ENCODE measurements at regions of chr15 and their contacts with region 1.

Region 1: DNA sequence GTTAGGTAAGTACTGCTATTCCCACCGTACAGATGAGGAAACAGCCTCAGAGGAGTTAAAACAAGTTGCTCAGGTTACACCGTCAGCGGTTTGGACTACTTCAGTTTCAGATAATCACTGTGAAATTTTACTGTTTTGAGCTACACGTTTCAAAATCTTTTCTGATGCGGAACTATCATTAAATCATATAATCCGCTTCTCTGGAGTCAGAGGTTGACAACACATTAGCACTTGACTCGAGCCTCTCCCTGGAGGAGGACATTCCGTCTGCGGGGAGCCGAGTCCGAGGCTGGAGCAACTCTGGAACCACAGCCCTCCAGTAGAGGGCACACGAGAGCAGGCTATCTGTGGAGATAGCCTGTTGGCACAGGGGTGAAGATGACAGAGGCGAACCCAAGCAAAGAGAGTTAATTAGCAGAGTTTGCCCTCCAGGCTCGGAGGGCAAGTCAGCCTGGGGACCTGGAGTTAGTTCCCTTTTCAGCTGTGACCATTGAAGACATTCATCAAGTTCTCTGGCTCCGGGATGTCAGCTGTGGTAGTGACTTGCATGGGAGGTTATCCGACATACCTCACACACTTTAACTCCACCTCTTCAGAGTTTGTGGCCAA is 131.2 kb downstream of the IGF1R start:
- DNase-seq: peak; percentile 64
- ATAC-seq: peak; percentile 83
- H3K4me3 ChIP-seq: no peak overlapping the region
- H3K27ac ChIP-seq: no peak overlapping the region
- H3K4me1 ChIP-seq: peaks cover 66% of the 10 kb centered on the region
- H3K27me3 ChIP-seq: no peaks in the 10 kb centered on the region
- CTCF ChIP-seq: peak; percentile 95
- EP300 ChIP-seq: no peak
- POLR2A ChIP-seq: no peak
- RAD21 ChIP-seq: peak; percentile 82

Region 2: DNA sequence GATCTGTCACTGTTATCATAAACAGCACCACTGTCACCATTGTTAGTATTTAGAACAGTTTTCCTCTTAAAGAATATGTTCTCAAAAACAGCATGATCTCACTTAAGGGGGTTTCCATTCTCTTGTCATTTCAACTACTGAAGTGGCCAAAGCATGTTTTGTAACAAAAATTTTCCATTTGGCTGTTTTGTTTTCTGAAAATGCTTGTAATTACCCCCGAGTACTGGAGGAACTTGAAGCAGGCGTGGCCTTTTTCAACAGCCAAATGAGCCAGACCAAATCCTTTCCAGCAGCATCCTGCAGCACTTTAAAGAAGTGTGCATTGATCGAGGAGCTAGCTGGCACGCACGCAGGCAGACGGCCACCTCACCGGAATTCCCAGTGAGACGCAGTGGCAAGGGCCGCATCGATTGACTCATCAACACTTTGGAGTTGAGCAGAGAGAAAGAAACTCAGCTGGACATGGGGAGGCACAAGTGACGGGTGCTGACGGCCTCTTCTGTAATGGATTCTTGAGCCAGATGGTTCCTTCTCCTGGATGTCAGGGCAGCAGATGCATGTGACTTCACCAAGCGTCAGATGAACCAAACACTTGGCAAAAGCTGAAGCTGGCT is 365.5 kb before region 1 on chr15:
- CTCF ChIA-PET with region 1: no interaction called
- POLR2A ChIA-PET with region 1: no interaction called
- in situ Hi-C with region 1: no loop called
- intact Hi-C with region 1: no loop called
- DNase-seq: no peak
- ATAC-seq: no peak
- H3K4me3 ChIP-seq: no peak overlapping the region
- H3K27ac ChIP-seq: no peak overlapping the region
- H3K4me1 ChIP-seq: no peaks in the 10 kb centered on the region
- H3K27me3 ChIP-seq: no peaks in the 10 kb centered on the region; a peak in 1 of 5 replicates
- CTCF ChIP-seq: no peak
- EP300 ChIP-seq: no peak
- POLR2A ChIP-seq: no peak
- RAD21 ChIP-seq: no peak

Region 3: GRCh38 chr15:98442379-98442833 is 337.2 kb before region 1 on chr15:
- CTCF ChIA-PET with region 1: no interaction called
- POLR2A ChIA-PET with region 1: no interaction called
- in situ Hi-C with region 1: no loop called
- intact Hi-C with region 1: loop called (anchors 5 kb)
- DNase-seq: peak; percentile 51
- ATAC-seq: peak; percentile 75
- H3K4me3 ChIP-seq: no peak overlapping the region
- H3K27ac ChIP-seq: no peak overlapping the region
- H3K4me1 ChIP-seq: no peaks in the 10 kb centered on the region
- H3K27me3 ChIP-seq: peaks cover 0 to 48% of the 10 kb centered on the region in 2 experiments
- CTCF ChIP-seq: peak; percentile 81
- EP300 ChIP-seq: no peak
- POLR2A ChIP-seq: no peak
- RAD21 ChIP-seq: 0 out of 2 replicates have a peak, but pooled peaks have one; percentile 52

Region 4: GRCh38 chr15:98658831-98659699 is 120.5 kb before region 1 on chr15:
- CTCF ChIA-PET with region 1: no interaction called
- POLR2A ChIA-PET with region 1: no interaction called
- in situ Hi-C with region 1: loop called (anchors 10 kb)
- intact Hi-C with region 1: no loop called
- DNase-seq: peak; percentile 66
- ATAC-seq: peak; percentile 64
- H3K4me3 ChIP-seq: no peak overlapping the region
- H3K27ac ChIP-seq: no peak overlapping the region
- H3K4me1 ChIP-seq: peaks cover 99% of the 10 kb centered on the region
- H3K27me3 ChIP-seq: no peaks in the 10 kb centered on the region
- CTCF ChIP-seq: peak; percentile 89
- EP300 ChIP-seq: no peak
- POLR2A ChIP-seq: no peak
- RAD21 ChIP-seq: peak; percentile 60

Region 5: GRCh38 chr15:98720577-98721565 is 58.7 kb before region 1 on chr15:
- CTCF ChIA-PET with region 1: no interaction called
- POLR2A ChIA-PET with region 1: no interaction called
- in situ Hi-C with region 1: no loop called
- intact Hi-C with region 1: loop called (anchors 5 kb)
- DNase-seq: no peak
- ATAC-seq: no peak
- H3K4me3 ChIP-seq: no peak overlapping the region
- H3K27ac ChIP-seq: no peak overlapping the region
- H3K4me1 ChIP-seq: peaks cover 89% of the 10 kb centered on the region
- H3K27me3 ChIP-seq: no peaks in the 10 kb centered on the region
- CTCF ChIP-seq: no peak
- EP300 ChIP-seq: no peak
- POLR2A ChIP-seq: no peak
- RAD21 ChIP-seq: no peak

Region 6: DNA sequence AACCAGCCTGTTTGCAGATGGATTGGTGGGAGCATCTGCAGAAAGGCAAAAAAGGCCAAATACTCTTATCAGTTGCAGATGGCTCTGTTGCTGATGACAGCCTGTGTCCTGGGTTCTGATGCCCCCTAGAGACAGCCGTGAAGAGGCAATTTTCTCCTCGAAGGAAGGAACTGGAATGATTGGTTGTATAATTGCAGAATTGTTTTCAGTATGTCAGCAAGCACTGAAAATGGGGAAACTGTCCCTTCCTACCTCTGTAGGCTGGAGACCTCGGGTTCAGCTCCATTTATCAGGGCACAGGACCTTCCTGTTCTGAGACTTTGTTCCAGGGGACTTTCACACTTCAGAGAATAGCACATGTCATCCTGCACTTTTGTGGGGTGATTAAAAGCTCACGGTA is 125.0 kb after region 1 on chr15:
- CTCF ChIA-PET with region 1: no interaction called
- POLR2A ChIA-PET with region 1: no interaction called
- in situ Hi-C with region 1: no loop called
- intact Hi-C with region 1: loop called (anchors 2 kb)
- DNase-seq: peak; percentile 41
- ATAC-seq: peak; percentile 76
- H3K4me3 ChIP-seq: no peak overlapping the region
- H3K27ac ChIP-seq: no peak overlapping the region
- H3K4me1 ChIP-seq: peaks cover 23% of the 10 kb centered on the region; the same call in 1 of the 2 replicates
- H3K27me3 ChIP-seq: no peaks in the 10 kb centered on the region
- CTCF ChIP-seq: peak; percentile 73
- EP300 ChIP-seq: no peak
- POLR2A ChIP-seq: no peak
- RAD21 ChIP-seq: 0 out of 2 replicates have a peak, but pooled peaks have one; percentile 17